ENCODE measurements at regions of chr1 and their contacts with region 1.

Region 1: GRCh38 chr1:223123011-223123610 is 19.9 kb downstream of the TLR5 start:
- DNase-seq: no peak
- H3K4me3 ChIP-seq: no peak overlapping the region
- H3K27ac ChIP-seq: no peak overlapping the region
- H3K4me1 ChIP-seq: peaks cover 0 to 9% of the 10 kb centered on the region in 2 experiments; a peak in 1 of 4 replicates
- H3K27me3 ChIP-seq: no peaks in the 10 kb centered on the region; the same call in 1 of the 2 replicates
- CTCF ChIP-seq: no peak
- EP300 ChIP-seq: no peak
- RAD21 ChIP-seq: no peak

Region 2: GRCh38 chr1:222750651-222751050 is 372.5 kb before region 1 on chr1:
- CTCF ChIA-PET with region 1: interaction called, 11 read pairs
- POLR2A ChIA-PET with region 1: no interaction called
- DNase-seq: no peak
- H3K4me3 ChIP-seq: no peak overlapping the region
- H3K27ac ChIP-seq: no peak overlapping the region
- H3K4me1 ChIP-seq: peaks cover 0 to 3% of the 10 kb centered on the region in 2 experiments; a peak in 1 of 4 replicates
- H3K27me3 ChIP-seq: no peaks in the 10 kb centered on the region
- CTCF ChIP-seq: no peak
- EP300 ChIP-seq: no peak
- RAD21 ChIP-seq: no peak

Region 3: GRCh38 chr1:223081181-223081994 is 41.7 kb before region 1 on chr1:
- CTCF ChIA-PET with region 1: interaction called, 93 read pairs
- POLR2A ChIA-PET with region 1: no interaction called
- DNase-seq: peak; percentile 91
- H3K4me3 ChIP-seq: peak overlapping the region; percentile 43 to 52; a peak in 3 of 4 replicates
- H3K27ac ChIP-seq: peak overlapping the region in 1 of 2 experiments; percentile 25; a peak in 1 of 4 replicates
- H3K4me1 ChIP-seq: peaks cover 0 to 12% of the 10 kb centered on the region in 2 experiments; a peak in 1 of 4 replicates
- H3K27me3 ChIP-seq: no peaks in the 10 kb centered on the region; the same call in 1 of the 2 replicates
- CTCF ChIP-seq: peak; percentile 90
- EP300 ChIP-seq: no peak
- RAD21 ChIP-seq: peak; percentile 98

Region 4: GRCh38 chr1:223102797-223103533 is 20.1 kb before region 1 on chr1:
- CTCF ChIA-PET with region 1: interaction called, 19 read pairs
- POLR2A ChIA-PET with region 1: no interaction called
- DNase-seq: peak; percentile 37
- H3K4me3 ChIP-seq: no peak overlapping the region
- H3K27ac ChIP-seq: peak overlapping the region in 1 of 2 experiments; percentile 82; a peak in 2 of 4 replicates
- H3K4me1 ChIP-seq: peaks cover 0 to 7% of the 10 kb centered on the region in 2 experiments; a peak in 1 of 4 replicates
- H3K27me3 ChIP-seq: 0 out of 2 replicates have a peak, but pooled peaks cover 1% of the 10 kb centered on the region
- CTCF ChIP-seq: no peak
- EP300 ChIP-seq: no peak
- RAD21 ChIP-seq: no peak

Region 5: DNA sequence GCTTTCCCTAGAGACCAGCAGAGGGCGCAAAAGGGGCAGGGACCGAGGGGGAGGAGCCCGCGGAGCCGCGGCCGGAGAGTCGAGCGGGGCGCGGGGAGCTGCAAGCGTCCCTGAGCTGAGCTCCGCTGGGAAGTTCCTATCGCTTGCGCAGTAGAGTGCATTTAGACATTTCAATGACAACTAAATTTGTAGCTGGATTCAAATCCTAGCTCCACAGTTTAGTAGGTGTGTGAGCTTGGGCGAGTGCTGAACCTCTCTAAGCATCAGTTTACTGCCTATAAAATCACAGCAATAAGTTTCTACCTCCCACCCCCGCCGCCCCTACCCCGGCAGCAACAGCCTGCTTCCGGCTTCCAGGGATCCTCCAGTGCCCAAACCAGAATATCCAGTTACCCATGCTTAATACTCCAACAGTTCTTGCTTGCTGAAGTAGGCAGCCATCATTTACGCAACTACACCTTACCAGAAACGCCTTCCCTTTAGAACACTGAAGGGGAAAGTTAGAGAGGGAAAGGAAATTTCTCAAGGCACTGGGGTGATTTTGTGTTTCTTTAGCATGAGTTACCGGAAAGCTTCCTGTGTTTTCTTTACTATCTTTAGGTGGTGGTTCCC is 10.8 kb after region 1 on chr1:
- CTCF ChIA-PET with region 1: interaction called, 92 read pairs
- POLR2A ChIA-PET with region 1: no interaction called
- DNase-seq: peak; percentile 93
- H3K4me3 ChIP-seq: peak overlapping the region; percentile 45 to 58
- H3K27ac ChIP-seq: no peak overlapping the region
- H3K4me1 ChIP-seq: peaks cover 10 to 16% of the 10 kb centered on the region in 2 experiments; a peak in 3 of 4 replicates
- H3K27me3 ChIP-seq: peaks cover 29% of the 10 kb centered on the region
- CTCF ChIP-seq: peak; percentile 95
- EP300 ChIP-seq: no peak
- RAD21 ChIP-seq: peak; percentile 77

Region 6: GRCh38 chr1:223175032-223175431 is 51.9 kb after region 1 on chr1:
- CTCF ChIA-PET with region 1: no interaction called
- POLR2A ChIA-PET with region 1: no interaction called
- DNase-seq: no peak
- H3K4me3 ChIP-seq: no peak overlapping the region
- H3K27ac ChIP-seq: no peak overlapping the region
- H3K4me1 ChIP-seq: no peaks in the 10 kb centered on the region
- H3K27me3 ChIP-seq: peaks cover 7% of the 10 kb centered on the region; the same call in 1 of the 2 replicates
- CTCF ChIP-seq: peak; percentile 26; the same call in 1 of the 2 replicates
- EP300 ChIP-seq: no peak
- RAD21 ChIP-seq: peak; percentile 33; the same call in 1 of the 2 replicates

Region 7: GRCh38 chr1:223363856-223364684 is 241.0 kb after region 1 on chr1 and contains the start of gene SUSD4:
- CTCF ChIA-PET with region 1: interaction called, 10 read pairs
- POLR2A ChIA-PET with region 1: no interaction called
- DNase-seq: peak; percentile 88
- H3K4me3 ChIP-seq: peak within 1 kb of the TSS; percentile 51 to 54
- H3K27ac ChIP-seq: no peak within 1 kb of the TSS
- H3K4me1 ChIP-seq: peaks cover 0 to 9% of the 10 kb centered on the region in 2 experiments; a peak in 1 of 4 replicates
- H3K27me3 ChIP-seq: peaks cover 45% of the 10 kb centered on the region
- CTCF ChIP-seq: no peak
- EP300 ChIP-seq: no peak
- RAD21 ChIP-seq: no peak
- polyA plus RNA-seq, gene SUSD4: 0.21 and 0.31 TPM in 2 replicates

Region 8: GRCh38 chr1:223403184-223403815 is 280.2 kb after region 1 on chr1:
- CTCF ChIA-PET with region 1: no interaction called
- POLR2A ChIA-PET with region 1: no interaction called
- DNase-seq: no peak
- H3K4me3 ChIP-seq: no peak overlapping the region
- H3K27ac ChIP-seq: no peak overlapping the region
- H3K4me1 ChIP-seq: no peaks in the 10 kb centered on the region
- H3K27me3 ChIP-seq: no peaks in the 10 kb centered on the region
- CTCF ChIP-seq: no peak
- EP300 ChIP-seq: no peak
- RAD21 ChIP-seq: no peak